Activated CD4-positive, alpha-beta memory T cell treated with anti-CD3 and anti-CD28 coated beads, Interleukin-2, amount 10 ng/mL, durations not matched to agents 7 days and 5 days (primary cell): ENCODE measurements at regions of chr14 and their contacts with region 1.

Region 1: DNA sequence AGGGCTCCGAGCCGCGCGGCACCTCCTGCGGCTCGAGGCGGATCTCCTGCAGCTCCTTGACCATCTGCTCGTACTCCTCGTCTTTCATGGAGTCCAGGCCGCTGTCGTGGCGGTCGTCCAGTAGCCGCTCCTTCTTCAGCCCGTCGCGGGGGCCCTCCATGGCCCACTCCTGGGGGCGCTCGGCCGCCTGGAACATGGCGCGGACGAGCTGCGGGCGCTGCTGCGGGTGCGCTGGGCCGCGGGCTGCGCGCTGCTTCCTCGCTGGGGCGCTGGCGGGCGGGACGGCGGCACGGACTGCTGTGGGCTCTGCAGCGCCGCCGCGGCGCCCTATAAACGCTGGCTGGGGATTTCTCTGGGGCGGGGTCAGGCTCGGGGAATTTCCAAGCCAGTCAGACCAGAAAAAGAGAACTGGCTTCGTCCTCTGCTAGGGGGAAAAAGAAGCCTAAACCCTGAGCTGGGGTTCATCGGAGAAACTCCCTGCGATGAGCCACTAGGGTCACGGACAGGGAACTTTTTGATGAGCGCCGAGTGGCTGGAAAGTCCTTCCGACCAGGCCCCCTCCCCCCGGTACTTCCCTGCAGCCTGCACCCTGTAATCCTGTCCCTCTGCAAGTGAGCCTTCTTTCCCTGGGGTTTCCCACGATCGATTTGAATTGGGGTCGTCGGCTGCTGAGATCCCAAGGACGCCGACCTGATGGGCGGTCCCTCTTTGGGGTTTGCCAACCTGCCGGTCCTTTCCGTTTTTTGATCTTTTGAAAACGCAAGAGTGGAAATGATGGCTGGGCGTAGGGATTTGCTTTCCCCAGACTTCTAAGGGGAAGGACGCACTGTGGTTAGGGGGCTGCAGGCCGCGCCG is at the start of gene NFKBIA:
- DNase-seq: peak; percentile 92
- H3K4me3 Mint-ChIP-seq: peak within 1 kb of the TSS; percentile 92
- H3K27ac Mint-ChIP-seq: peak within 1 kb of the TSS; percentile 95
- H3K4me1 Mint-ChIP-seq: peaks cover 54% of the 10 kb centered on the region
- H3K27me3 Mint-ChIP-seq: no peaks in the 10 kb centered on the region
- total RNA-seq, gene NFKBIA: 102 to 109 TPM

Region 2: DNA sequence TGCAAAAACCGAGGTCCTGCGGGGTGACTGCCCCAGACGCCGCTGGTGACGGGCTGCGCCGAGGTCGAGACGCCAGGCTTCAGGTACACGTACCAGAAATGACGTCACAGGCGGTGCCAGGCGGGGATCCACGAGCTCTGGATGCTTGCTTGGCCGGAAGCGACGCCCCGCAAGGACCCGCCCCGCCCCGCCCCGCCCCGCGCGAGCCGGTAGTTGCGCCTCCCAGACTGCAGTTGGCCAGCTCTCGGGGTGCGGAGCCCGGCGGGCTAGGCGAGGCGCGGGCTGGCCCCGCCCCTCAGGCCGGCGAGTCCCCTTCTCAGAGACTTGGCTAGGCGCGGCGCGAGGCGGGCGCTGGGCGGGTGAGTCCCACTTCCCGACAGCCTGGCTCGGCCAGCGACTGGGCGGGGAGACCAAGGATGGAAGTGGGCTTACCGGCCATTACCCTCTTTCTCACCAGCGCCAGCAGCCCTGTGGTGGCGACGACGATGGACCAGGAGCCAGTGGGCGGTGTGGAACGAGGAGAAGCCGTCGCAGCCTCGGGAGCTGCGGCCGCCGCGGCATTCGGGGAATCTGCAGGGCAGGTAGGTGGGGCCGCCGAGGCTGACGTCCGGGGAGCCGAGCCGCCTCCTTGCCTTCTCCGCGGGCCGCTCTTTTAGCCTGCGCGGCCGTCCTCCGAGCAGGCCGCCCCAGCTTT is 358.5 kb before region 1 on chr14 and contains the start of gene FAM177A1:
- CTCF ChIA-PET with region 1: interaction called, 7 read pairs
- POLR2A ChIA-PET with region 1: interaction called, 47 read pairs
- DNase-seq: peak; percentile 99
- H3K4me3 Mint-ChIP-seq: peak within 1 kb of the TSS; percentile 83
- H3K27ac Mint-ChIP-seq: peak within 1 kb of the TSS; percentile 96
- H3K4me1 Mint-ChIP-seq: peaks cover 37% of the 10 kb centered on the region
- H3K27me3 Mint-ChIP-seq: no peaks in the 10 kb centered on the region
- total RNA-seq, gene FAM177A1: 51.4 to 51.5 TPM

Region 3: DNA sequence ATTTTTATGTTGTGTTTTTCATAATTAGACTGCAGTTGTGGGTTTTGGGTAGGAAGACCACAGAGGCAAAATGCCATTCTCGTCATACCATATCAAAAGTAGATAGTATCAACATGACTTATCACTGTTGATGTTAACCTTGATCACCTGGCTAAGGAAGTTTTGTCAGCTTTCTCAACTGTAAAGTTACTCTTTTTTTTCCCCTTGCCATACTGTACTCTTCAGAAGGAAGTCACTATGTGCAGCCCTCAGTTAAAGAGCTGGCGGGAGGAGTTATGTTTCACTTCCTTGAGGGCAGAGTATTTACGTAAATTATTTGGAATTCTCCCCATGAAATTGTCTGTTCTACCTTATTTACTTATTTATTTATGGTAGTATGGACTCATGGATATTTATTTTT is 203.6 kb before region 1 on chr14:
- CTCF ChIA-PET with region 1: no interaction called
- POLR2A ChIA-PET with region 1: interaction called, 18 read pairs
- DNase-seq: no peak
- H3K4me3 Mint-ChIP-seq: no peak overlapping the region
- H3K27ac Mint-ChIP-seq: peak overlapping the region; percentile 56
- H3K4me1 Mint-ChIP-seq: peaks cover 48% of the 10 kb centered on the region
- H3K27me3 Mint-ChIP-seq: no peaks in the 10 kb centered on the region

Region 4: DNA sequence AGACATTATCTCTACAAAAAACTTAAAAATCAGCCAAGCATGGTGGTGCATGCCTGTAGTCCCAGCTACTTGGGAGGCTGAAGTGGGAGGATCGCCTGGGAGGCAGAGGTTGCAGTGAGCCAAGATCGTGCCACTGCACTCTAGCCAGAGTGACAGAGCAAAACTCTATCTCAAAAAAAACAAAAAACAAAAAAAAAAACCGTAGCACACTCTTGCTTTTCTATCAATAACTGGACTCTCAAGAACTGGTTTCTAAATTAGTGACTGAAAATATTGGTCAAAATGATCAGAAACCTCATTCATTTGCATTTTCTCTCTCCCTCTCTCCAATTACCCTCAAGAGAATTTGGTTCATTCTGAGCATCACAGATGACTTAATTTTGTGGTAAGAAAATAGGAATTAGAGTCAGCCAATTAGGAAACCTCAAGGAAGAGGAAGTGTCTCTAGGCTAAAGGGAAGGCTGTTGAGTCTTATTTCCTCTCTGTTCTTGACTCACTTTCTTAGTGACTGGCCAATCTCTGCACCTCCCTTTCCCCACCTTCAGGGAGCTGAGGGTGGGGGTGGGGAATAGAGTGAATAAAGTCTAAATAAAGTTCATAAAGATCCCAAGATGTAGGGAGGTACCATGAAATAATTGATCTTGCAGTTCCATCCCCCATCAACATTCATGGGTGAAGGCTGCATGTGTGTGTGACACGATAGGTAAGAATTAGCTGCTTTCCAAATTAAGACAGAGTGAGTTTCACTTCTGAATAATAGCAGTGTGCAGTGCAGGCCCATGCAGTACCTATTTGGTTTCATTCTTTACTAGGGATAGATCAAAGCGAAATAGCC is 119.3 kb before region 1 on chr14:
- CTCF ChIA-PET with region 1: interaction called, 36 read pairs
- POLR2A ChIA-PET with region 1: interaction called, 155 read pairs
- DNase-seq: peak; percentile 28
- H3K4me3 Mint-ChIP-seq: peak overlapping the region; percentile 22
- H3K27ac Mint-ChIP-seq: peak overlapping the region; percentile 82
- H3K4me1 Mint-ChIP-seq: peaks cover 43% of the 10 kb centered on the region
- H3K27me3 Mint-ChIP-seq: no peaks in the 10 kb centered on the region

Region 5: DNA sequence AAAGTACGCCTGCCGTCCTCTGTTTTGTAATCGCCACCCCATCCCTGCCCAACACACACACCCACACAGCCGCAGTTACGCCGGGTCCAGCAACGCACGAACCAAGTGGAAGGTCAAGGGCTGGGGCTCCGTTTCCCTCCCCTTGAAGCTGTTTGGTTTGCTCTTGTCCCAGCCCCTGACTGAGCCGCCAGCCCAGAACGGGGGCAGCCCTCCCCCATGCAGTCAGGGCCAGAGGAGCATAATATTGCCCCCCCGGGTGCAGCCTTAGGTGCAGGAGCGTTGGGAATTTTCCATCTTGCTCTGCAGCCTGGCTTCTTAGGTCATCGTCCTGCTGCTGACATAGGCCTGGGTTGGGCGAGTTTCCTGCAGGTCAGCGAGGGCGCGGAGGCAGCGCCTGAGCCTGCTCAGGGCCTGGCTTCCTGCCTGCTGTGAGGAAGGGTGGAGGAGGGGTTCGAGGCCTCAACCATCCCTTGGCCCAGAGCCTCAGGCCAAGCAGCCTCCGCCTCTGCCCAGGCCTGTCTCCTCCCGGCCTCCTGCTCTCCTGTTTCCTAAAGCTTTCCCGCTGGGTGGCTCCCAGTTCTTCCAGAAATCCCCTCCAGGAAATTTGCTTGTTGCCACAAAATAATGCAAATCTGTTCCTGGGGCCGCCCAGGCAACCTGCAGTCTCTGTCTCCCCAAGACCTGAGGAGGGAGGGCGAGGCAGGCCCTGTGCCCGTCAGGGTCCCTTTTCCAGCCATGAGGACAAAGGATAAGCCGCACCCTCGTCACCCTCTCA is 68.0 kb before region 1 on chr14:
- CTCF ChIA-PET with region 1: interaction called, 20 read pairs
- POLR2A ChIA-PET with region 1: interaction called, 74 read pairs
- DNase-seq: no peak
- H3K4me3 Mint-ChIP-seq: no peak overlapping the region
- H3K27ac Mint-ChIP-seq: no peak overlapping the region
- H3K4me1 Mint-ChIP-seq: peaks cover 30% of the 10 kb centered on the region
- H3K27me3 Mint-ChIP-seq: no peaks in the 10 kb centered on the region

Region 6: GRCh38 chr14:35416108-35416750 is 11.6 kb after region 1 on chr14:
- CTCF ChIA-PET with region 1: interaction called, 50 read pairs
- POLR2A ChIA-PET with region 1: interaction called, 174 read pairs
- DNase-seq: peak; percentile 62
- H3K4me3 Mint-ChIP-seq: peak overlapping the region; percentile 18
- H3K27ac Mint-ChIP-seq: peak overlapping the region; percentile 75
- H3K4me1 Mint-ChIP-seq: peaks cover 47% of the 10 kb centered on the region
- H3K27me3 Mint-ChIP-seq: no peaks in the 10 kb centered on the region